Posterior cingulate gyrus (tissue), 11 donors: ENCODE measurements at regions of chr15 and their contacts with region 1.

Region 1: GRCh38 chr15:63157118-63157843 is at the start of gene RPS27L:
- DNase-seq: peak; percentile 82 to 99 (median 92)

Region 2: GRCh38 chr15:63122002-63122893 is 35.0 kb before region 1 on chr15:
- intact Hi-C with region 1: loop called (anchors 5 kb)
- DNase-seq: peak; percentile 36 to 96 (median 68)

Region 3: DNA sequence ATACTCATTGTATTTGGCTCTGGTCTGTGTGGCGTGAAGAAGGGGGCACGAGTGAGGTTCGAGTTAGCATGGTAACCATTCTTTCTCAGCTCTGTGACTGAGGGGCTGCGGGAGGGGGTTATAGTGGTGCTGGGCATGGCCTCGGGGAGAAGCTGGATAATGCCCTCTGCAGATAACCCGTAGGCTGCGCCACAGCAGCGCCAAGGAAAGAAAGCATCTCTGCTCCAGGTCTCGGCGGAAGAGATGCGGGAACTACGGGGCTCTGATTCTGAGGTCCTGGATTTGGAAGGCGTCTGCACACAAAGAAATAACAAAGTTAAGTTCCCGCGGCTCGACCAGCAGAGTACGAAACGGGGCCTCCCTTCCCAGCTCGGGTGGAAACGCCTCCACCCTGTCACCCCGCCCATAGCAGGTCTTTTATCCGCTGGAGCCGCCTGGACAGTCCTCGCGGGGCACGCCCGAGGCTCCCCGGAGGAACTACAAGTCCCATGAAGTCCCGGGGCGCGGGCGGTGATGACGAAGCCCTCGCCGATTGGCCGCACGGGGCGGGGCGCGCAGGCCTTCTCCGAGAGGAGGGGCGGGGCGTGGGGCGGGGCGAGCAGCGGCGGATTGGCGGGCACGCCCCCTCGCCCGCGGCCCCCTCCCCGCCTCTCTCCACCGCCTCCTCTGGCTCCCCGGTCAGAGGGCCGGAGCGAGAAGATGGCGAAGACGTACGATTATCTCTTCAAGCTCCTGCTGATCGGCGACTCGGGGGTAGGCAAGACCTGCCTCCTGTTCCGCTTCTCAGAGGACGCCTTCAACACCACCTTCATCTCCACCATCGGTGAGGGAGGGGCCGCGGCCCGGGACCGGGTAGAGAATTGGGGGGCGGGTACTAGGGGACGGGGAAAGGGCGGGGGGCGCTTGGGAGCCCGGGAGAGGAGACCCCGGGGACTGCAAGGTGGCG is 31.9 kb after region 1 on chr15 and contains the start of gene RAB8B:
- intact Hi-C with region 1: loop called (anchors 2 kb)
- DNase-seq: peak; percentile 95 to 100 (median 99)